ENCODE measurements at regions of chr7 and their contacts with region 1.

Region 1: GRCh38 chr7:149195180-149196150 is at the start of gene ZNF282:
- DNase-seq: peak; percentile 87
- H3K4me3 ChIP-seq: peak within 1 kb of the TSS; percentile 80 to 89 (median 83)
- H3K27ac ChIP-seq: peak within 1 kb of the TSS; percentile 78
- H3K4me1 ChIP-seq: peaks cover 16% of the 10 kb centered on the region
- H3K27me3 ChIP-seq: no peaks in the 10 kb centered on the region
- CTCF ChIP-seq: peak; percentile 37 to 78
- total RNA-seq, gene ZNF282: 38.0 to 44.9 TPM

Region 2: DNA sequence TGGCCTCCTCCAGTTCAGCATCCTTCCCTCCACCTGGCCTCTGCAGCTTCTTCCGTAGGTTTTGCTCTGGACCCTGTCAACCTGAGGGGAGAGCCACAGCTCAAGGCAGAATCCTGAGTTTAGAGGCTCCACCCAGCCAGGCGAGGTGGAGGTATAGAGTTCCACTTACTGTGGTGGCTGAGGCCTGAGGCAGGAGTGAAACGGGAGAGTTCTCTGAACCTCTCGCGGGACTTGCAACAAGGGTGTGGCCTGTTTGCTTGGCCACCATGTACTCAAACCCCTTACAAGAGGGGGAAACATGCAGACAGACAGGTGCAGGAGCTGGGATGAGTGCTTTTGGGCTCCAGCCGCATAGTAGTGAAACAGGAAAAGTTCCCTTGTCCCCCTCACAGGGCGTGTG is 758.9 kb before region 1 on chr7:
- CTCF ChIA-PET with region 1: no interaction called
- dilution Hi-C with region 1: no loop called
- in situ Hi-C with region 1: no loop called
- intact Hi-C with region 1: no loop called
- DNase-seq: no peak
- H3K4me3 ChIP-seq: no peak overlapping the region
- H3K27ac ChIP-seq: no peak overlapping the region
- H3K4me1 ChIP-seq: peaks cover 14% of the 10 kb centered on the region
- H3K27me3 ChIP-seq: no peaks in the 10 kb centered on the region
- CTCF ChIP-seq: no peak

Region 3: GRCh38 chr7:149125863-149126661 is 69.4 kb before region 1 on chr7 and contains the start of gene ZNF425:
- CTCF ChIA-PET with region 1: no interaction called
- dilution Hi-C with region 1: no loop called
- in situ Hi-C with region 1: no loop called
- intact Hi-C with region 1: loop called (anchors 1 kb)
- DNase-seq: peak; percentile 92
- H3K4me3 ChIP-seq: peak within 1 kb of the TSS; percentile 67 to 87 (median 78)
- H3K27ac ChIP-seq: peak within 1 kb of the TSS; percentile 93
- H3K4me1 ChIP-seq: peaks cover 7% of the 10 kb centered on the region
- H3K27me3 ChIP-seq: no peaks in the 10 kb centered on the region
- CTCF ChIP-seq: peak; percentile 61 to 94
- total RNA-seq, gene ZNF425: 3.0 to 3.3 TPM

Region 4: GRCh38 chr7:149171892-149172533 is 23.5 kb before region 1 on chr7:
- CTCF ChIA-PET with region 1: no interaction called
- dilution Hi-C with region 1: no loop called
- in situ Hi-C with region 1: no loop called
- intact Hi-C with region 1: loop called (anchors 1 kb)
- DNase-seq: peak; percentile 83
- H3K4me3 ChIP-seq: no peak overlapping the region
- H3K27ac ChIP-seq: peak overlapping the region; percentile 95
- H3K4me1 ChIP-seq: peaks cover 17% of the 10 kb centered on the region
- H3K27me3 ChIP-seq: no peaks in the 10 kb centered on the region
- CTCF ChIP-seq: no peak

Region 5: DNA sequence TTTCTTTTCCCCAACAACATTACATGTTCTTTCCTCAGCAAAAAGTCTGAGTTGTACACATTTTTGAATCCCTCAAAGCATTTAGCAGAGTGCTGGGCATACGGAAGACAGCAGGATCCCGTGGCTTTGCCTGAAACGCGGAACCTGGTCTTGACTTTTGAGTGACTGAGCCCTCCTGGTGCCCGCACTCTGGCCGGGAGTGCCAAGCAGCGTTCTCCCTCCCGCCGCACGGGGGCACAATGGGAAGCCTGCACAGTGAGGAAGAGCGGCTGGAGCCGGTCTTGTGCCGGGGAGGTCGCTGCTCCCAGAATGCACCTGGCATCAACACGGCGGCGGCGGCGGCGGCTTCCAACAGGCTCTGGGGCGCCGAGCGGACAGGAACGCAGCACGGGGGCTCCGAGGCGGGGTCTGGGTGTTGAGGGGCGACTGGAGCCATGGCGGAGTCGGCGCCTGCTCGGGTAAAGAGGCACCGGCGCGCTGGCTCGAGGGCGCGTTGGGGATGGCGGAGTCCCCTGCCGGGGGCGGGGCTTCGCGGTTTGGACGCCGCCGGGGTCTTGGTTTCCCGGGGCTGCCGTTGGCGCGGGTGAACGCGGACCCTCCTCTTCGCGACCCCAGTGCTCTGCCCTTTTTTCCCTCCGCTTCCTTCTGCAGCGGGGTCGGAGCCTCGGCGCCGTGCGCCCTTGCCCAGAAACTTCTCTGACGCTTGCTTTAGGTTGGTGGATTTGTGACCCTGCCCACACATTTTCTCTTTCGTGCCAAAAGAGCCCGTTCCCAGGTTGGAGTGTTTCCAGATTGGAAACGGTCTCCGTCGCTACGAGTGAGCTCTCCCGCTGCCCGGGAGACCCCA is 44.1 kb after region 1 on chr7 and contains the start of gene ZNF212:
- CTCF ChIA-PET with region 1: no interaction called
- dilution Hi-C with region 1: no loop called
- in situ Hi-C with region 1: no loop called
- intact Hi-C with region 1: loop called (anchors 1 kb)
- DNase-seq: peak; percentile 85
- H3K4me3 ChIP-seq: peak within 1 kb of the TSS; percentile 73 to 98 (median 97)
- H3K27ac ChIP-seq: peak within 1 kb of the TSS; percentile 70
- H3K4me1 ChIP-seq: peaks cover 22% of the 10 kb centered on the region
- H3K27me3 ChIP-seq: no peaks in the 10 kb centered on the region
- CTCF ChIP-seq: peak; percentile 88 to 89
- total RNA-seq, gene ZNF212: 9.2 to 11.1 TPM

Region 6: DNA sequence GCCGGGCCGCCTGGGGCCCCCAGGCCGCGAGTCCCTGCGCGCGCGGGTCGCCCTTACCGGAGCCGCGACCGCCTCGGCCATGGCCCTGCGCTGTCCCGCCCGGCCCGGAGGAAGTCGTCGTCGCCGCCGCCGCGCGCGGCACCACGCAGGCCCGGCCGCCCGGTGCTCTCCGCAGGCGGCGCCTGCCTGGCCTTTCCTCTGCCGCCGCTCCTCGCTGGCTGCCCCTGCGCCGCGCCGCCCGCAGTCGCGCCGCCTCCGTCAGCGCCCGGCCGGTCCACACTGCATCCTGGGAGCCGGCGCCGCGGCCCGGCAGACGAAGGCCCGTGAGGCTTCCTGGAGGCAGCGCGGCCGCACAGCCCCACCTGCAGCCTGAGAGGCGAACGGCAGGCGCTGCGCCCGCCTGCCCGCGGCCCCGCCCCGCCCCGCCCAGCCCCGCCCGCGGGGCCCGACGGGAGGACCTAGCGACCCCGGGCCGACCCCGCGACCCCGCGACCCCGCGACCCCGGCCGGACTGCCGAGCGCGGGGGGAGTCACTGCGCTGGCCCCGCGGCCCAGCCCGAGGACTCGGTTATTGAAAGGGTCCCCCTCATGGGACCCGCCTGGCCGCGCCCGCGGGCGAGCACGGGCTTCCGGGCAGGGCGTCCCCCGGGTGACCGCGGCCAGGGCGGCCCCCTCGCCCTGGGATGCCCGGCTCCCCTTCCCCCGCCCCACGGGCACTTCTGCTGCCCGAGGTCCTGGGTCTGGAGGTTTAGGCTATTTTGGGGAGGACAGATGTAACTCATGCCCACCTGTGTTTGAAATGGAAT is 302.2 kb after region 1 on chr7 and contains the start of gene ZNF746:
- CTCF ChIA-PET with region 1: no interaction called
- dilution Hi-C with region 1: no loop called
- in situ Hi-C with region 1: no loop called
- intact Hi-C with region 1: loop called (anchors 2 kb)
- DNase-seq: peak; percentile 77
- H3K4me3 ChIP-seq: peak within 1 kb of the TSS; percentile 58 to 97 (median 88)
- H3K27ac ChIP-seq: peak within 1 kb of the TSS; percentile 58
- H3K4me1 ChIP-seq: peaks cover 11% of the 10 kb centered on the region
- H3K27me3 ChIP-seq: no peaks in the 10 kb centered on the region
- CTCF ChIP-seq: peak; percentile 22 to 67
- total RNA-seq, gene ZNF746: 22.1 to 34.3 TPM